AG04450 (cell line): ENCODE measurements at regions of chr11 and their contacts with region 1.

Region 1: DNA sequence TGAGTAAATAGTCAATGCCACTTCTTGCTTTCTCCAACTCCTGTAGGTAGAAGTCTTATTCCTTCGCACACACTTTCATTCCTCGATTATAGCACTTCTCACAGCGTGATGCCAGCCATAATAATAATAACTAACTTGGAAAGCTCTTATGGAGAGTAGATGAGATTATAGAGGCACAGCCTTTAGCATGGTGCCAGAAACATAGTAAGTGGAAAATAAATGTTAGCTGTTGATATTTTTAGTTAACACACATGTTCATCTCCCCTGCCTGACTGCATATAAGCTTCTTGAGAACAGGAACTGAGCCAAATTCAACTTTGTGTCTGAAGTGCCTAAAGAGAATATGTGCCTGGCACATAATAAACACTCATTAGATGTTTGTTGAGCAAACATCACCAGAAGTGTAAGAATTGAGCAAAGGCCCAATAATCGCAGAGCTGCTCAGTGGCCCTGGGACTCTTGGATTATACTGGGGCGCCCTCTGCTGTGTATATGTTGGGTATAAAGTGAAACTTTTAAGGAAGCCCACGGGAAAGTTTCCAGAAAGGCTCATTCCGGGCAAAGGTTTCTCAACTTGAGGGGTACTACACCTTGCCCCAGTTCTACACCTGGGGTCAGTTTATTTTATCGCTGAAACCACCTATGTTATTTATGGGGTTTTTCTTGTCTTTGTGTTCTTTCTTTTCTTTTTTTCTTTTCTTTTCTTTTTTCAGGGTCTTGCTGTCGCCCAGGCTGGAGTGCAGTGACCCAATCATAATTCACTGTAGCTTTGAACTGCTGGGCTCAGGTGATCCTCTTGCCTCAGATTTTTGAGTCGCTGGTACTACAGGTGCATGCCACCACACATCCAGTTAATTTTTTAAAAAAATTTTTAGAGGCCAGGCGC is 22.3 kb downstream of the SLN start:
- DNase-seq: peak; percentile 2
- H3K4me3 ChIP-seq: no peak overlapping the region
- H3K27ac ChIP-seq: no peak overlapping the region
- H3K27me3 ChIP-seq: no peaks in the 10 kb centered on the region
- CTCF ChIP-seq: peak; percentile 71

Region 2: GRCh38 chr11:107457558-107458271 is 231.8 kb before region 1 on chr11 and contains the start of gene CWF19L2:
- CTCF ChIA-PET with region 1: interaction called, 11 read pairs
- POLR2A ChIA-PET with region 1: no interaction called
- DNase-seq: peak; percentile 89
- H3K4me3 ChIP-seq: peak within 1 kb of the TSS; percentile 83
- H3K27ac ChIP-seq: no peak within 1 kb of the TSS
- H3K27me3 ChIP-seq: no peaks in the 10 kb centered on the region
- CTCF ChIP-seq: no peak
- polyA plus RNA-seq, gene CWF19L2: 3.4 and 4.7 TPM in 2 replicates

Region 3: DNA sequence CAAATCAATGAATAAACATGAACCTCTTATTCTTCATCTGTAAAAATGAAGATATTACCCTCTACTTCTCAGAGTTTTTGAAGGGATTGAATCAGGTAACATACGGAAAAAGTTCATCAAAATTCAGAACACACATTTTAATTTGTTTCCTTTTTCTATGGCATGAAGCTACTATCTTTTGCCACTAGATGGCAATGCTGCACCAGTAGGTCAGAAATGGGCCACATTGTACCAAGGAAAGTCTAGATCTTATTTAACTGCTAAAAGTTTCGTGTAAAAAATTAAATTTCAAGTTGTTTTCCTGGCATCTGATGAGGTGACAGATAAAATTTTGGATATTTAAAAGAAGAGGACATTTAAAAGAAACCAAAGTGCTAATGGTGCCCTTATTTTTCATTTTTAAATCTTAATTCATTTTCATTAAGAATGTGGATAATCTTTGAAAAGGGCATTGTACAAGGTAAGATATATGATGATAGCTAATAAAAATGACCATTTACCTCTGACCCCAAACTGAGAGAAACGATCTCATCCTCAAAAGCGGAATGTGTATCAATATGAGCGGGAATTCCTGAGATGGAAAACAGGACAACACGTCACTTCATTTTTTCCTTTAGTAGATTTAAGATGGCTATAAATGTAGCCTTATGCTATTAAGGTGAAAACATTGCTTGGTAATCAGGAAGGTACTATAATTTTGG is 140.2 kb before region 1 on chr11:
- CTCF ChIA-PET with region 1: interaction called, 85 read pairs
- POLR2A ChIA-PET with region 1: no interaction called
- DNase-seq: no peak
- H3K4me3 ChIP-seq: no peak overlapping the region
- H3K27ac ChIP-seq: no peak overlapping the region
- H3K27me3 ChIP-seq: no peaks in the 10 kb centered on the region
- CTCF ChIP-seq: peak; percentile 93

Region 4: GRCh38 chr11:107565219-107565937 is 124.2 kb before region 1 on chr11 and contains the start of gene ALKBH8:
- CTCF ChIA-PET with region 1: interaction called, 197 read pairs
- POLR2A ChIA-PET with region 1: no interaction called
- DNase-seq: no peak
- H3K4me3 ChIP-seq: peak within 1 kb of the TSS; percentile 96
- H3K27ac ChIP-seq: peak within 1 kb of the TSS; percentile 66
- H3K27me3 ChIP-seq: peaks cover 3% of the 10 kb centered on the region
- CTCF ChIP-seq: no peak
- polyA plus RNA-seq, gene ALKBH8: 4.8 and 7.3 TPM in 2 replicates

Region 5: DNA sequence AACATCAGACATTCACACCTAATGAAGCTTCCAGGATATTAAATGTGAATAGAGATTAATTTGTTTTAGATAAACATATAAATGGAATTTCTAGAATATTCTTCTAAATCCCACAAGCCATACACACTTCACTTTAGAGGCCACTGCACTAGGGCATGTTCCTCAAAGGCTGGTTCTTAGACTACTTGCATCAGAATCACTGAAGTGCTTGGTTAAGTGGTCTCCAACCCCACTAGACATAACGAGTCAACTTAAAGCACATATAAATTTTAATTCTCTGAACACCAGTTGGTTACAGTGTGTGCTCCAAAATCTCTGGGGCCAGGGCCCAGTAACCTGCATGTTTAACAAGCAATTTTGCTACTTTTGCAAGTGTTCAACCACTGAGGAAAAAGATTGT is 116.1 kb before region 1 on chr11:
- CTCF ChIA-PET with region 1: interaction called, 197 read pairs
- POLR2A ChIA-PET with region 1: no interaction called
- DNase-seq: no peak
- H3K4me3 ChIP-seq: no peak overlapping the region
- H3K27ac ChIP-seq: no peak overlapping the region
- H3K27me3 ChIP-seq: peaks cover 7% of the 10 kb centered on the region
- CTCF ChIP-seq: no peak

Region 6: DNA sequence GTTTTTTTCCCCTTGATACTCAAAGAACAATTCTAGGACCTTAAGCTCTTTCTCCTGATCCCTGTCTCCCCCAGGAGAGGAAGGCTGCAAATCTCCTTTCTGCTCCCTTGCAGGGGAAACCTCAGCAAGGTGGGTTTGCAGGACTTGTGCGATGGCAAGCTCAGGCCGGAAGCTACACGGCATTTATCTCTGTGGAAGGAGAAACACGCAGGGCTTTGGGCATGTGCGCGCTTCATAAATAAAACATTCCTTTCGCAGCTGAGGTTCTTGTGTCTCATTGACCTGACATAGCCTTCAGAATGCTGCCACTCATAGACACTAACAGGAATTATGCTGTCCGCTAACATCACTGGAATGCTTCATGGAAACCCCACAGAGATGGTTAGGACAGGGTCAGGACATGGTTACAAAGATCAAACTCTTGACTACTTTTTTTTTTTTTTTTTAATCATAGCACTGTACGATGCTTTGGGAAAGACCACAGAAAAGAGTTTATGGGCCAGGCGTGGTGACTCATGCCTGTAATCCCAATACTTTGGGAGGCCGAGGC is 20.3 kb before region 1 on chr11:
- CTCF ChIA-PET with region 1: interaction called, 14 read pairs
- POLR2A ChIA-PET with region 1: no interaction called
- DNase-seq: no peak
- H3K4me3 ChIP-seq: no peak overlapping the region
- H3K27ac ChIP-seq: no peak overlapping the region
- H3K27me3 ChIP-seq: peaks cover 2% of the 10 kb centered on the region
- CTCF ChIP-seq: no peak

Region 7: GRCh38 chr11:107722662-107723061 is 33.1 kb after region 1 on chr11:
- CTCF ChIA-PET with region 1: no interaction called
- POLR2A ChIA-PET with region 1: no interaction called
- DNase-seq: no peak
- H3K4me3 ChIP-seq: no peak overlapping the region
- H3K27ac ChIP-seq: no peak overlapping the region
- H3K27me3 ChIP-seq: peaks cover 8% of the 10 kb centered on the region
- CTCF ChIP-seq: no peak

Region 8: GRCh38 chr11:107821199-107821927 is 131.8 kb after region 1 on chr11:
- CTCF ChIA-PET with region 1: no interaction called
- POLR2A ChIA-PET with region 1: no interaction called
- DNase-seq: no peak
- H3K4me3 ChIP-seq: no peak overlapping the region
- H3K27ac ChIP-seq: no peak overlapping the region
- H3K27me3 ChIP-seq: no peaks in the 10 kb centered on the region
- CTCF ChIP-seq: no peak

Region 9: DNA sequence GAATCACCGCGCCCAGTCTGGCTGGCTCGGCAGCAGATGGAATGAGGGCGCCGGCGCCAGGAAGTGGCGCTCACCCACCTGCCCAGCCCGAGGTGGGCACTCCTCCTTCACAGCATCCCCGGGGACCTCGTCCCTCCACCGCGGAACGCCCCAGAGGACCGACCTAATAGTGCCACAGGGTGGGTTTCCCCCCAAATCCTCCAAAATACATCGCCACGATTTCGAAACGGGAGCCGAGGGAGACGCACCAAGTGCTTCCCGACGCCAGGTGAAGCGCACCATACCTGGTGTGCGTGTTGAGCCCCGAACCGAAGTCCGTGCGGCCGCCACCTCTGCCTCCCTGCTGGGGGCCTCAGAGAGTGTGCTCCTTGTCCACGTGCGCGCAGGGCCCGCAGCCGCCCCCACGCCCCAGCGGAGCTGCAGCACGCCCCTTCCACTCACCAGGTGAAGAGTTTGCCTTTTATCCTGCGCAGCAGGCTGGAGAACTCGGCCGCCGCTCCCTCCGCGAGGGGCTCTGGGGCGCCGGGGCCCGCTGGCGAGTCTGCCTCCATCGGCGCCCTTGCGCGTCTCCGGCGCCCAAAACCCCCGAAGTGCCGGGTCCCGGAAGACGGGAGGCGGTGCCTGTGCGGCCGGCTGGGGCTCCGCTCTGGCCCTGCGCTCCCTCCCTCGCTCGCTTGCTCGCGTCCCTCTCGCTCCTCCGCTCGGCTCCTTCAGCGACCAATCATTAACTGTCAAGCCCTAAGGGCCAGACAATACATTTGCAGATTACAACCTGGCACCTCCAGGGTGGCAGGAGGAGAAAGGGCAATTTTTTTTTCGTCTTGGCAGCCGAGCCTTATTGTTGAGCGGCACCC is 168.9 kb after region 1 on chr11 and contains the start of gene SLC35F2:
- CTCF ChIA-PET with region 1: interaction called, 11 read pairs
- POLR2A ChIA-PET with region 1: no interaction called
- DNase-seq: no peak
- H3K4me3 ChIP-seq: peak within 1 kb of the TSS; percentile 87
- H3K27ac ChIP-seq: no peak within 1 kb of the TSS
- H3K27me3 ChIP-seq: peaks cover 2% of the 10 kb centered on the region
- CTCF ChIP-seq: 0 out of 2 replicates have a peak, but pooled peaks have one; percentile 2
- polyA plus RNA-seq, gene SLC35F2: 8.6 and 9.9 TPM in 2 replicates